WTC11 (cell line): ENCODE measurements at regions of chr19 and their contacts with region 1.

Region 1: GRCh38 chr19:5547881-5548280 is 19.9 kb downstream of the TINCR start:
- DNase-seq: peak; percentile 69
- ATAC-seq: peak; percentile 74
- H3K4me3 Mint-ChIP-seq: no peak overlapping the region
- H3K27ac Mint-ChIP-seq: peak overlapping the region; percentile 48; the same call in 1 of the 2 replicates
- H3K4me1 Mint-ChIP-seq: peaks cover 12% of the 10 kb centered on the region
- H3K27me3 Mint-ChIP-seq: peaks cover 15% of the 10 kb centered on the region
- CTCF ChIP-seq: peak; percentile 36; the same call in 1 of the 2 replicates

Region 2: GRCh38 chr19:5340637-5341447 is 207.0 kb before region 1 on chr19 and contains the start of gene PTPRS:
- CTCF ChIA-PET with region 1: no interaction called
- POLR2A ChIA-PET with region 1: no interaction called
- DNase-seq: peak; percentile 92
- ATAC-seq: peak; percentile 74
- H3K4me3 Mint-ChIP-seq: peak within 1 kb of the TSS; percentile 91
- H3K27ac Mint-ChIP-seq: no peak within 1 kb of the TSS
- H3K4me1 Mint-ChIP-seq: peaks cover 28% of the 10 kb centered on the region
- H3K27me3 Mint-ChIP-seq: peaks cover 43% of the 10 kb centered on the region
- CTCF ChIP-seq: no peak
- total RNA-seq, gene PTPRS: 201 to 253 TPM (median 244 TPM) in 3 replicates

Region 3: DNA sequence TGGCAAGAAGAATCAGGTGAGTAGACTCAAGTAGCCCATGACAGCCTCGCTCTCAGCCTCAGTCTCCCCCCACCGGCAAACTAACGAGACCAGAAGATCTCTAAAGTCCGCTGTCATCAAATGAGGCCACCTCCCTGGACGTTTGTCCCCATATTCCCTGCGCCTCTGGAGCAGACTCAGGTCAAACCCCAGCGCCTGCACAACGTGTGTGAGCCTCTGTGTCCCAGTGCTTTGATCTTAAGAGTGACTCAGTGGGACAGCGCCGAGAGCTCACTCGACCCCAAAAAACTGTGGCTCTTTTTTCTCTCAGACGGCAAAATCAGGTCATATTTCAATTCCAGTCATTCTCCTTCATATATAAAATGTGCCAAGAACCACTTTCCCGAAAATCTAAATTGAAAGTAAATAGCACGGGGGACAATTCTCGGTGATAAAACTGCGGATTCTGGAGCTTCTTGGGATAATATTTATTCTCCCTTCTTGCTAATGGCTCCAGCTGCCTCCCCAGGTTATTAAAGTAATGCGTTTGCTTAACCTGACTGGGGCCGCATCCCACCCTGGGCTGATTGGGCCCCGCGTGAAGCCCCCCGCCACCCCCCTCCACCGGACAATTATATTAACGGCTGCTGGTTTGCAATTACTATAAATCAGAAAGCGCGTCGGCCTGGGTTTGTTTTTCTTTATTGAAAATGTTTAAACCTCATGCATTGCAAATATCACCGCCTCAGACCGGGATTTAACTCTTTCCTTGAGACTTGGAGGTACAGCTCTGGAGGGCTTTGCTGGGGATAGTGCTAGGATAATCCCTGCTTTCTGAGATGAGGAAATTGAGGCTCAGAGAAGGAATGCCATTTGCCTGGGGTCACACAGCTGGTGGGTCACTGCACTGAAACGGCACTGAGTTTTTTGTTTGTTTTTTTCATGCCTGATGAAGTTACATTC is 130.1 kb before region 1 on chr19:
- CTCF ChIA-PET with region 1: no interaction called
- POLR2A ChIA-PET with region 1: no interaction called
- DNase-seq: no peak
- ATAC-seq: no peak
- H3K4me3 Mint-ChIP-seq: no peak overlapping the region
- H3K27ac Mint-ChIP-seq: peak overlapping the region; percentile 57; the same call in 1 of the 2 replicates
- H3K4me1 Mint-ChIP-seq: peaks cover 30% of the 10 kb centered on the region
- H3K27me3 Mint-ChIP-seq: peaks cover 11% of the 10 kb centered on the region
- CTCF ChIP-seq: no peak

Region 4: GRCh38 chr19:5524081-5524480 is 23.8 kb before region 1 on chr19:
- CTCF ChIA-PET with region 1: interaction called, 28 read pairs
- POLR2A ChIA-PET with region 1: no interaction called
- DNase-seq: no peak
- ATAC-seq: no peak
- H3K4me3 Mint-ChIP-seq: no peak overlapping the region
- H3K27ac Mint-ChIP-seq: no peak overlapping the region
- H3K4me1 Mint-ChIP-seq: peaks cover 9% of the 10 kb centered on the region
- H3K27me3 Mint-ChIP-seq: peaks cover 16% of the 10 kb centered on the region
- CTCF ChIP-seq: no peak

Region 5: DNA sequence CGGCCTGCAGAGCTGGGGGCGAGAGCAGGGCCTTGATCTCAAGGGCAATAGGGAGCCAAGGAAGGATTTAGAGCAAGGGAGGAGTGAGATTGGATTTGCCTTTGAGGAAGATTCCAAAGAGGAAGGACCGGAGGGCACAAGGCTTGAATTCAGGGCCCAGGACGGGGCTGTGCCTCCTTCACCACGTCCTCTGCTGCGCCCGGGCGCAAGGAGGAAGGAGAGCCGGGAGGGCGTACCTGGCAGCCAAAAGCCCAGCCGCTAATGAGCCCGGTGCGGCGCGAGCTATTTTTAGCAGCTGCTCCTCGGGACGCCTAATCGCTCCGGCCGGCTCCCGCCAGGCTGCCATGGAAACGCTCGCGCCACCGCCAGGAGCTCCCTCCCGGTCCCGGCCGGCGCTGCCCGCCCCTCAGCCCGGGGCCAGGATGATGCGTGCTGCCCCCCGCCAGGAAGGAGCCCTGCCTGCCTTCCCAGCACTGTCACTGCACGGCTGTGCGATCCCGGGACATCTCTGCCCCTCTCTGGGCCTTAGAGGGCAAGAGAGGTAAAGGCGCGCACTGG is 11.5 kb before region 1 on chr19:
- CTCF ChIA-PET with region 1: interaction called, 25 read pairs
- POLR2A ChIA-PET with region 1: no interaction called
- DNase-seq: peak; percentile 91
- ATAC-seq: peak; percentile 85
- H3K4me3 Mint-ChIP-seq: peak overlapping the region; percentile 55
- H3K27ac Mint-ChIP-seq: peak overlapping the region; percentile 84
- H3K4me1 Mint-ChIP-seq: peaks cover 21% of the 10 kb centered on the region
- H3K27me3 Mint-ChIP-seq: peaks cover 46% of the 10 kb centered on the region
- CTCF ChIP-seq: no peak

Region 6: DNA sequence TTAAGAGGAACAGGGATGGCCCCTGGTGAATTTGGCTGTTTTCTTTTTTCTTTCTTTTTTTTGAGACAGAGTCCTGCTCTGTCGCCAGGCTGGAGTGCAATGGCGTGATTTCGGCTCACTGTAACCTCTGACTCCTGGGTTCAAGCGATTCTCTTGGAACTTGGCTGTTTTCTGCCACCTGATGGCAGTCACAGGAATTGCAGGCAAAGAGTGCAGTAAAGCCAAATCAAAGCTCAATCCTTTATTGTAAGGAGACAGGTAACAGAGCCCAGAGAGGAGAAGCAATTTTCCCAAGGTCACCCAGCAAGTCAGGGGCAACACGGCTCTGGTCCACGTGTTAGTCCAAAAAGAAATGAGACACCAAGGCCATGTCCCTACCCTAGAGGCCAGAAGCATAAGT is 13.7 kb after region 1 on chr19:
- CTCF ChIA-PET with region 1: interaction called, 33 read pairs
- POLR2A ChIA-PET with region 1: no interaction called
- DNase-seq: peak; percentile 46
- ATAC-seq: no peak
- H3K4me3 Mint-ChIP-seq: no peak overlapping the region
- H3K27ac Mint-ChIP-seq: no peak overlapping the region
- H3K4me1 Mint-ChIP-seq: peaks cover 21% of the 10 kb centered on the region
- H3K27me3 Mint-ChIP-seq: peaks cover 2% of the 10 kb centered on the region
- CTCF ChIP-seq: peak; percentile 75

Region 7: GRCh38 chr19:5567360-5567969 is 19.6 kb after region 1 on chr19 and contains the start of gene TINCR:
- CTCF ChIA-PET with region 1: interaction called, 33 read pairs
- POLR2A ChIA-PET with region 1: no interaction called
- DNase-seq: peak; percentile 64
- ATAC-seq: peak; percentile 81
- H3K4me3 Mint-ChIP-seq: peak within 1 kb of the TSS; percentile 52
- H3K27ac Mint-ChIP-seq: no peak within 1 kb of the TSS
- H3K4me1 Mint-ChIP-seq: no peaks in the 10 kb centered on the region
- H3K27me3 Mint-ChIP-seq: peaks cover 16% of the 10 kb centered on the region
- CTCF ChIP-seq: no peak
- total RNA-seq, gene TINCR: 0.60 to 0.85 TPM (median 0.76 TPM) in 3 replicates

Region 8: GRCh38 chr19:5585461-5586299 is 37.8 kb after region 1 on chr19:
- CTCF ChIA-PET with region 1: interaction called, 10 read pairs
- POLR2A ChIA-PET with region 1: no interaction called
- DNase-seq: peak; percentile 73
- ATAC-seq: peak; percentile 79
- H3K4me3 Mint-ChIP-seq: peak overlapping the region; percentile 61
- H3K27ac Mint-ChIP-seq: peak overlapping the region; percentile 95
- H3K4me1 Mint-ChIP-seq: peaks cover 17% of the 10 kb centered on the region
- H3K27me3 Mint-ChIP-seq: no peaks in the 10 kb centered on the region
- CTCF ChIP-seq: no peak

Region 9: DNA sequence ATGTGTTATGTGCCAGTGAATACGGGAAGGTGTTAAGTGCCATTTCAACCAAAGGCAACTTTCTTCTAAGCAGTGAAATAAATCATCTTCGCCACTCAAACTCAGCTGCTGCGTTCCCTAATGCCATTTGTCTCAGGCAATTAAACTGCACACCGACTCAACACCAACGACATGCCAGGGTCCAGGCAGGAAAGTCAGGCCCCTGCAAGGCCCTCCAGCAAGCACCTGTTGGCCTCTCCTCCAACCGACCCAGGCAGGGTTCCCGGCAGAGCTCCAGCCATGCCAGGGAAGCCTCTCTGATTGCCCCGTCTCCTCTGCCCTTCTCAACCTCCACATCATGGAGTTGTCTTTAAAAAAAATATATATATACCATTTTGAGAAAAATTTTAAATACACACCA is 52.9 kb after region 1 on chr19:
- CTCF ChIA-PET with region 1: no interaction called
- POLR2A ChIA-PET with region 1: no interaction called
- DNase-seq: no peak
- ATAC-seq: no peak
- H3K4me3 Mint-ChIP-seq: no peak overlapping the region
- H3K27ac Mint-ChIP-seq: no peak overlapping the region
- H3K4me1 Mint-ChIP-seq: no peaks in the 10 kb centered on the region
- H3K27me3 Mint-ChIP-seq: no peaks in the 10 kb centered on the region
- CTCF ChIP-seq: no peak

Region 10: GRCh38 chr19:6014551-6015135 is 466.8 kb after region 1 on chr19:
- CTCF ChIA-PET with region 1: no interaction called
- POLR2A ChIA-PET with region 1: no interaction called
- DNase-seq: no peak
- ATAC-seq: no peak
- H3K4me3 Mint-ChIP-seq: no peak overlapping the region
- H3K27ac Mint-ChIP-seq: no peak overlapping the region
- H3K4me1 Mint-ChIP-seq: no peaks in the 10 kb centered on the region
- H3K27me3 Mint-ChIP-seq: no peaks in the 10 kb centered on the region
- CTCF ChIP-seq: no peak